GM13976 (cell line): ENCODE measurements at regions of chr9 and their contacts with region 1.

Region 1: DNA sequence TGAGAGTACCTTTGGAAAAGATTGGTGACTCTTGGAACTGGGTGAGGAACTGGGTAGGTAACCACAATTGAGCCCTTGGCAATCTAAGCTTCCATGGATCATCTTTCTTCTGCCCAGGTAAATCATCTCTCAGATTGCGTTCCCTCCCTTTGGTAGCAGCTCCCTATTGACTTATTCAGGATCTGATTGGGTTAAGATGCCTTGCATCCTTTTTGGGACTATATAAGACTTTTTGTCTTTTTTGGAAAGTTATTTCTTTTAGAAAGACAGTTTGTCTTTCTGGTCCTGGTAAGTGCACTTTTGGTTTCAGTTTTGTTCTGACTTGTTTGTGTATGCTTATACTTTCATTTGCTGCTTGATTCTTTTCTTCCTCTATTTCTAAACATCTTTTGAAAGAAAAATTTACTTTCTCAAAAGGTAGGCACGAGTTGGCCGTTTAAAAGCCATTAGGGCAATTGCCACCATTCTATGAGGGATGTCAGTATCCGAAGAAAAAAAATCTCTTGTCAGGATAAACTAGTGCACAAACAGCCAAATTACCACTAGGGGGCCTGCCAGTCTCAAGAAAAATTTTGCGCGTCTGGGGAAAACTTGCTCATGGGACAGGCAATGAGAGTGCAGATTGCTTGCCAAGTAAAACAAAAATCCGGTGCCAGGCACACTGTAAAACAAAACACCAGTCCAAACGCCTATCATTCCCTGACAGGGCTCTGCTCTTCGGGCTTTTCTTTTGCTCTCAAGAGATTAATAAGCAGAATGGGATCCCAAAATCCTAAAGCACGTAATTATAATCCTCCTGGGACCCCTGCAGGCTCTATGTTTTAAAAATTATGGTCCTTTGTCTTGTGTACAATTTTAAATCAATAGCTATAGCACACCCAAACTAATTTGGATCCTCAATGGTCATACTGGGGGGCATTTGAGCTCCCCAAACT is 12.8 kb downstream of the OR1J1 start:
- DNase-seq: peak; percentile 70
- CTCF ChIP-seq: peak; percentile 58

Region 2: GRCh38 chr9:121871431-121872025 is 593.4 kb before region 1 on chr9:
- in situ Hi-C with region 1: no loop called
- DNase-seq: no peak
- CTCF ChIP-seq: no peak

Region 3: GRCh38 chr9:122125158-122125508 is 339.8 kb before region 1 on chr9:
- in situ Hi-C with region 1: loop called (anchors 25 kb)
- DNase-seq: peak; percentile 90
- CTCF ChIP-seq: peak; percentile 83

Region 4: DNA sequence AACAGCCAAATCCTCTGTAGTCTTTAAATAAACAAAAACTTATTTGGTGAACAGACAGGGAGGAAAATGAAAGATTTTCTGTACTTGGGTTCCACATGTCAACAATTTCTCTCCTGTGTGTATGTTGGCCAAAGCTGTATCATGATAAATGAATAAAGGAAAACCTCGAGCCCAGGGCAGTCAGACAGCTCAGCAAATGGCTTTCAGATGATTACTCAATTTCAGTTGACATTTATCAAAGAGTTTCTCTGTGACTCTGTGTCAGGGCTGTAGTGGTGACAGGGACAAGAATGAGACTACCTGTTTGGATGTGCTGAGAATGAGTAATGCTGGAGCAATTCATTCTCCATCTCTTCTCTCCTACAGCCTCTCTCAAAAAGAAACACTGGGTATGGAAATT is 139.8 kb before region 1 on chr9:
- in situ Hi-C with region 1: no loop called
- DNase-seq: no peak
- CTCF ChIP-seq: no peak

Region 5: DNA sequence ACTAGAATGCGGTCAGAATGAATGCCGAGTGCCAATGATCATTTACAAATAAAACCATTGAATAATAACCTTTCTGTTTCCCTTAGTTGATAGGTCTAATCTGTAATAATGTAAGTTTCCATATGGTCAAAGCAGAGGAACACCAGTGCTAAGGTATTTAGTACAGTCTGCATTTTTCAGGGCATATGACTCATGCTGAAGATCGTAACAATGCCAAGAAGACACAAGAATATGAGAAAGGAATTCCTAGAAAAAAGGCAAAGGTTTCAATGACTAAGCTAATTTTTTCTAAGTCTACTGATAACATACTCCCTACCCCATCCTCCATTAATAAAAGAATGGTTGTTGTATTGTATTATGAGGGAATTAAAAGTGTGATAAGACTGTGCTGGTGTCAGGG is 115.5 kb after region 1 on chr9:
- in situ Hi-C with region 1: no loop called
- DNase-seq: no peak
- CTCF ChIP-seq: no peak

Region 6: GRCh38 chr9:122810306-122810946 is 345.5 kb after region 1 on chr9:
- in situ Hi-C with region 1: loop called (anchors 10 kb)
- DNase-seq: peak; percentile 83
- CTCF ChIP-seq: peak; percentile 67

Region 7: DNA sequence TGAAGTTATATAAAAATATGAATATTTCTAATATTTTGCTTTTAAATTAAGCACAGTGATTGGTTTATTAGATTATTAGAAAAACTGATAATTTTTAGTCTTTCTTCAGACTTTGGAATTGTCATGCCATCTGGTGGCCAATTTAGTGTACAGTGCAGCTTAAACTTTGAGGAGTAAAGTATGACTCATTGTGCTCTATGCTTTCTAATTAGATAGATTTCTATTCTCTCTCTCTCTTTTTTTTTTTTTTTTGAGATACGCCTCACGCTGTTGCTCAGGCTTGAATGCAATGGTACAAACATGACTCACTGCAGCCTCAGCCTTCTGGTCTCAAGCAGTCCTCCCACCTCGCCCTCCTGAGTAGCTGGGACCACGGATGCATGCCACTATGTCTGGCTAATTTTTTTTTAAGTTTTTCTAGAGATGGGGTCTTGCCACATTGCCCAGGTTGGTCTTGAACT is 526.5 kb after region 1 on chr9:
- in situ Hi-C with region 1: loop called (anchors 25 kb)
- DNase-seq: peak; percentile 51
- CTCF ChIP-seq: peak; percentile 57

Region 8: GRCh38 chr9:123349691-123350480 is 885.0 kb after region 1 on chr9:
- in situ Hi-C with region 1: loop called (anchors 25 kb)
- DNase-seq: peak; percentile 86
- CTCF ChIP-seq: peak; percentile 68